Endothelial cell of umbilical vein (primary cell): ENCODE measurements at regions of chrX and their contacts with region 1.

Region 1: DNA sequence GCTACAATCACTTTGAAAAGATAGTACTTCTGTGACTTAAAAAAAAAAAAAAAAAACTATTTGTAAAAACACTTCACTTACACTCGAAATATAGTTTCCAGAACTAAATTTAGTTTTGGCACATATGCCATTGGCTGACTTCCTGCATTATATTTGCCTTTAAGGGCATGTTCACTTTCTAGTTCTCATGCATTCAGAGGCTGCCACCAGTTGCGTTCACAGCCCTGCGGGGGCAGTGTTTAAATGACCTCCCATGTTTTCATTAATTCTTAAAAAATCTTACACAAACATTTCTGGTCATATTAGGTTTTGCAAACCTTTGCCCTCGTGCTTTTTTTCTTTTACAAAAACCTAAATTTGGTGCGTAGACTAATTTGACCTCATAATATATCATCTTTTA is 12.4 kb upstream of the ARHGAP6 start:
- DNase-seq: no peak
- H3K4me3 ChIP-seq: no peak overlapping the region
- H3K27ac ChIP-seq: no peak overlapping the region
- H3K4me1 ChIP-seq: no peaks in the 10 kb centered on the region
- H3K27me3 ChIP-seq: no peaks in the 10 kb centered on the region
- CTCF ChIP-seq: peak in 1 of 2 donors; percentile 12
- POLR2A ChIP-seq: no peak

Region 2: GRCh38 chrX:11688201-11688600 is 10.0 kb after region 1 on chrX:
- CTCF ChIA-PET with region 1: interaction called, 10 read pairs
- POLR2A ChIA-PET with region 1: no interaction called
- dilution Hi-C with region 1: no loop called
- intact Hi-C with region 1: no loop called
- DNase-seq: peak; percentile 0
- H3K4me3 ChIP-seq: no peak overlapping the region
- H3K27ac ChIP-seq: no peak overlapping the region
- H3K4me1 ChIP-seq: peaks cover 4% of the 10 kb centered on the region
- H3K27me3 ChIP-seq: no peaks in the 10 kb centered on the region
- CTCF ChIP-seq: no peak
- POLR2A ChIP-seq: no peak

Region 3: GRCh38 chrX:11944501-11944900 is 266.3 kb after region 1 on chrX:
- CTCF ChIA-PET with region 1: no interaction called
- POLR2A ChIA-PET with region 1: no interaction called
- dilution Hi-C with region 1: no loop called
- intact Hi-C with region 1: no loop called
- DNase-seq: peak; percentile 15
- H3K4me3 ChIP-seq: no peak overlapping the region
- H3K27ac ChIP-seq: no peak overlapping the region
- H3K4me1 ChIP-seq: peaks cover 3% of the 10 kb centered on the region
- H3K27me3 ChIP-seq: no peaks in the 10 kb centered on the region
- CTCF ChIP-seq: peak; percentile 54 to 63
- POLR2A ChIP-seq: no peak